Mammary epithelial cell (primary cell): ENCODE measurements at regions of chrX and their contacts with region 1.

Region 1: DNA sequence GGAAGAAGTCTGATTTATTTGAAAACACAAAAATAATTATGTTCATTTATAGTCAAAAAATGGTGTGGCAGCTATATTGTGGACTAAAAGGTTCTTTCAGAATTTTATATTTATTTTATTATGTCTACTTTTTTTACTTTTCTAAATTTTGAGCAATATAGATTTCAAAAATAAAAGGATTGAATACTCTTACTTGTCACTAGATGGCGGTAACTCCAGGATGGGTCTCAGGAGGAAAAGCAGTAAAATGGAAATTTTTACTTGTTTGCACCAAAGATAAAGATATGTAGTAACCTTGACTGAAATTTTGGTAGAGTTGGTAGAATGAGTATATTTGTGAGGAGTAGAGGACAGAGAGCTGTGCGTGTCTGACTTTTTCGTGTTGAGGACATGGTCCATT is 14.5 kb upstream of the DACH2 start:
- DNase-seq: no peak
- H3K4me3 ChIP-seq: no peak overlapping the region
- H3K27ac ChIP-seq: no peak overlapping the region
- H3K4me1 ChIP-seq: peaks cover 8% of the 10 kb centered on the region
- H3K27me3 ChIP-seq: no peaks in the 10 kb centered on the region
- CTCF ChIP-seq: peak; percentile 41 to 66

Region 2: DNA sequence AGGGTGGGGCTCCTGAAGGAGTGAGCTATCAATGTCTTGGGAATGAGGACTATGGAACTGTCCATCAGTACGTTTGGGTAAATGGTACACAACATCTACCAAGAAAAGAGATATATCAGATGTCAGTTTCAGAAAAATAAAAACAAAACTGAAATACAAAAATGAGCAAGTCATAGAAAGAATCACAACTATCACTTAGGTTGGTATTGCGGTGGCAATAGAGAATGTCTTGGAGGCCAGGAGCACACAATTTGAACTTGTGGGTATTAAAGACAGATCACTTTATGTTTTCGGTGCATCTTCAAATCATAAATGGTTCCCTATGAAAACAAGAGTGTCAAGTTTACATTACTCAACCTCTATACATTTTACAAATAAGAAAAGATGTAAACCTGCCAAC is 263.2 kb before region 1 on chrX:
- CTCF ChIA-PET with region 1: no interaction called
- dilution Hi-C with region 1: no loop called
- in situ Hi-C with region 1: no loop called
- intact Hi-C with region 1: no loop called
- DNase-seq: no peak
- H3K4me3 ChIP-seq: no peak overlapping the region
- H3K27ac ChIP-seq: no peak overlapping the region
- H3K4me1 ChIP-seq: no peaks in the 10 kb centered on the region
- H3K27me3 ChIP-seq: no peaks in the 10 kb centered on the region
- CTCF ChIP-seq: no peak

Region 3: GRCh38 chrX:86171366-86171765 is 37.6 kb after region 1 on chrX:
- CTCF ChIA-PET with region 1: no interaction called
- dilution Hi-C with region 1: no loop called
- in situ Hi-C with region 1: no loop called
- intact Hi-C with region 1: loop called (anchors 1 kb)
- DNase-seq: peak; percentile 51
- H3K4me3 ChIP-seq: no peak overlapping the region
- H3K27ac ChIP-seq: no peak overlapping the region
- H3K4me1 ChIP-seq: no peaks in the 10 kb centered on the region
- H3K27me3 ChIP-seq: no peaks in the 10 kb centered on the region
- CTCF ChIP-seq: peak; percentile 52 to 71

Region 4: DNA sequence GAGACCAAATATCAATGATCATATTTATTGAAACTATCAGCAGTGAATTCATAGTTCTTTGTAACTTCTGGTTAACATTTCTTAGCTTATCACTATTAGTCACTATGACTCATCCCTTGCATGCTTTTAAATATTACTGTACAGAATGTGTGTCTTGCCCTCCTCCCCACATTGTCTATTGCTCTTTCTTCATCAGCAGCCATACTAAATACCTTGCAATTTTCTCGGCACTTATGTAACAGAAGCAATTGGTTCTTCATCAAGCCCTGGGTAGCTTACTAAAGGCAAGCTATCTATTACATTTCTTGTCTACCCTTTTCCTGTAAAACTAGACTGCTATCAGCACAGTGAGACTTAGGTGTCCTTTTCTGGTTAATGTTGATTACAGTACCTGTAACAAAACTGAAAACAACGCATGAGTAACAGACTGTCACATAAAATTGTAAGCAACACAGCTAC is 1392.0 kb after region 1 on chrX:
- CTCF ChIA-PET with region 1: no interaction called
- dilution Hi-C with region 1: no loop called
- in situ Hi-C with region 1: no loop called
- intact Hi-C with region 1: no loop called
- DNase-seq: peak; percentile 71
- H3K4me3 ChIP-seq: no peak overlapping the region
- H3K27ac ChIP-seq: no peak overlapping the region
- H3K4me1 ChIP-seq: peaks cover 5% of the 10 kb centered on the region
- H3K27me3 ChIP-seq: no peaks in the 10 kb centered on the region
- CTCF ChIP-seq: no peak